ENCODE measurements at regions of chr22 and their contacts with region 1.

Region 1: DNA sequence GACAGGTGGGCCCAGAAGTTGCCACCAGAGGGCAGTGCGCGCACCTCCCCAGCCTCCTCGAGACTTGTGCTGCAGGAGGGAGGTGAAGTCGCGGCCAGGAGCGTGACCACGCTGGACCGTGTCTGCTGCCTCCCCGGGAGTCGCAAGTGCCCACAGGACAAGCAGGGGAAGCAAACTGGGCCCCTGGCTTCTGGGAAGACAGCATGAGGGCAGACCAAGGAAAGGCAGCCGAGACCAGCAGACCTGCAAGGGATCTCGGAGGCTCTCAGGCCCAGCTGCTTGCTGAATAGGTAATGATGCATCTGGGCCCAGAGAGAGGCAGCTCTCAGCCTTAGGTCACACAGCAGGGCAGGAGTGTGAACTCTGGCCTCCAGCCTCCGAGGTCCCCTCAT is 17.0 kb upstream of the IL2RB start:
- DNase-seq: peak; percentile 70
- H3K4me3 ChIP-seq: no peak overlapping the region
- H3K27ac ChIP-seq: no peak overlapping the region
- H3K4me1 ChIP-seq: peaks cover 3% of the 10 kb centered on the region
- CTCF ChIP-seq: peak; percentile 93; the same call in 1 of the 2 replicates

Region 2: DNA sequence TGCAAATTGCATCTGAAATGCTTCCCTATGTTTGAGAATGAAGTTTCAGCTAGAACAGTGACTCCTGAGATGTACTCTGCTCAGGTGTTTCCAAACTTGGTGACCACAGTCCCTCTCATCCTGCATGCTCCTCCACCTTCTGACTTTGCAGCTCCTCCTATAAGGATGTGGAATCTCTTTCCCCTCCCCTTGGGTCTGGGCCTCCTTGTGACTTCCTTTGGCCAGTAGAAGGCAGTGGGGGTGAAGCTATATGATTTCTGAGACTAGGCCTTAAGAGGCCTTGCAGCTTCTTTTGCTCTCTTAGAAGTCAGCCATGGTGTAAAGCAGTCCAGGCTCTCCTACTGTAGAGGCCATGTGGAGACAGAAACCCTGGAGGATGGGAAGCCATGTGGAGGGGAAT is 202.6 kb before region 1 on chr22:
- CTCF ChIA-PET with region 1: no interaction called
- POLR2A ChIA-PET with region 1: no interaction called
- intact Hi-C with region 1: no loop called
- DNase-seq: no peak
- H3K4me3 ChIP-seq: no peak overlapping the region
- H3K27ac ChIP-seq: no peak overlapping the region
- H3K4me1 ChIP-seq: no peaks in the 10 kb centered on the region
- CTCF ChIP-seq: no peak

Region 3: GRCh38 chr22:37121887-37122591 is 44.6 kb before region 1 on chr22:
- CTCF ChIA-PET with region 1: no interaction called
- POLR2A ChIA-PET with region 1: no interaction called
- intact Hi-C with region 1: no loop called
- DNase-seq: peak; percentile 30
- H3K4me3 ChIP-seq: no peak overlapping the region
- H3K27ac ChIP-seq: no peak overlapping the region
- H3K4me1 ChIP-seq: no peaks in the 10 kb centered on the region
- CTCF ChIP-seq: no peak

Region 4: DNA sequence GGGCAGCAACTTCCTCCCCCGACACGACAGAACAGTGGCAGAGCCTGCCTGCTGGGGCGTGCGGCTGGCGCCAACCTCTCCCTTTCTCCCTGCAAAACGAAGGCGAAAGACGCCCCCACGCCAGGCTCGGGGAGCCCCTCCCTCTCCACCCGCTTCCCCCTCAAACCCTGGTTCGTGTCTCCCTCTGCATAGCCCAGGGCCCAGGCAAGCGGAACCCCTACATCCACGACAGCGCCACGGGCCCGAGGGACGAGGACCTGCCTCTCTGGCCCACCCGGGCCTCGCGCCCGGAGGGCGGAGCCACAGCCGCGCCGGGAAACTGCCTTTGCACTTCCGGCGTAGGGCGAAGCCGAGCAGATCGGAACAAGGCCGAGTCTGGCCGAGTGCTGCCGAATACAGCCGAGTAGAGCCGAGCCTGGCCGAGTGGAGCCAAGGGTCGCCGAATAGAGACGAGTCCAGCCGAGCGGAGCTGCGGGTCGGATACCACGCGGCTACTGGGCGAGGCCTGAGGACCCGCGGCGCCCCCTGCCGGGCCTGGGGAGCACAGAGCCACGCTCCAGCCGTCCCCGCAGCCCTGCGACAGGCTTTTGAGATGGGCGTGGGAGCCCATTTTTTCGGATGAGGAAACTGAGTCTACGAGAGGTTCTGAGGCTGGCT is 32.6 kb after region 1 on chr22:
- CTCF ChIA-PET with region 1: no interaction called
- POLR2A ChIA-PET with region 1: no interaction called
- intact Hi-C with region 1: loop called (anchors 1 kb)
- DNase-seq: peak; percentile 99
- H3K4me3 ChIP-seq: peak overlapping the region; percentile 80
- H3K27ac ChIP-seq: peak overlapping the region; percentile 86
- H3K4me1 ChIP-seq: peaks cover 33% of the 10 kb centered on the region
- CTCF ChIP-seq: peak; percentile 83

Region 5: DNA sequence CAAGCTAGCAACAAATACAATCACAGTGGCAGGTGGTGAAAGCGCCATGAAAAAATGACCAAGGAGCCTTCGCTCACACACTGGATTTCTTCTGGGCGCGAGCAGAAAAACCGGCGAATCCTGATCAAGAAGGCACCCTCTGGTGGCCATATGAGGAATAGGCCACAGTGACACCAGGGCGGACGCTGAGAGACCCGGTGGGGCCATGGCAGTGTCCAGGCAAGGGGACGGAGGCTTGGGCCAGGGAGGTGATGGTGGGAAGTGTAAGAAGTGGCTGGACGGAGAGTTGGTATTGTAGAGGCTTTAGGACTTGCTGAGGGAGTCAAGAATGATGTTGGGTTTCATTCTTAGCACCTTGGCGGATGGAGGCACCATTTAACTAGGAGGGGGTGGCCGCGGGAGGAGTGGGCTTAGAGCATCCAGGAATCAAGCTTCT is 94.2 kb after region 1 on chr22:
- CTCF ChIA-PET with region 1: interaction called, 3 read pairs
- POLR2A ChIA-PET with region 1: no interaction called
- intact Hi-C with region 1: loop called (anchors 1 kb)
- DNase-seq: peak; percentile 78
- H3K4me3 ChIP-seq: no peak overlapping the region
- H3K27ac ChIP-seq: no peak overlapping the region
- H3K4me1 ChIP-seq: peaks cover 26% of the 10 kb centered on the region
- CTCF ChIP-seq: peak; percentile 97